ENCODE measurements at regions of chr11 and their contacts with region 1.

Region 1: GRCh38 chr11:17352950-17353820 is 1.6 kb downstream of the NCR3LG1 start:
- DNase-seq: peak; percentile 87 to 91
- H3K4me3 ChIP-seq: peak overlapping the region; percentile 61
- H3K4me3 Mint-ChIP-seq: peak overlapping the region; percentile 91
- H3K27ac Mint-ChIP-seq: peak overlapping the region; percentile 72
- H3K4me1 ChIP-seq: peaks cover 4% of the 10 kb centered on the region
- H3K4me1 Mint-ChIP-seq: peaks cover 14% of the 10 kb centered on the region
- H3K27me3 ChIP-seq: no peaks in the 10 kb centered on the region
- H3K27me3 Mint-ChIP-seq: no peaks in the 10 kb centered on the region
- CTCF ChIP-seq: no peak

Region 2: DNA sequence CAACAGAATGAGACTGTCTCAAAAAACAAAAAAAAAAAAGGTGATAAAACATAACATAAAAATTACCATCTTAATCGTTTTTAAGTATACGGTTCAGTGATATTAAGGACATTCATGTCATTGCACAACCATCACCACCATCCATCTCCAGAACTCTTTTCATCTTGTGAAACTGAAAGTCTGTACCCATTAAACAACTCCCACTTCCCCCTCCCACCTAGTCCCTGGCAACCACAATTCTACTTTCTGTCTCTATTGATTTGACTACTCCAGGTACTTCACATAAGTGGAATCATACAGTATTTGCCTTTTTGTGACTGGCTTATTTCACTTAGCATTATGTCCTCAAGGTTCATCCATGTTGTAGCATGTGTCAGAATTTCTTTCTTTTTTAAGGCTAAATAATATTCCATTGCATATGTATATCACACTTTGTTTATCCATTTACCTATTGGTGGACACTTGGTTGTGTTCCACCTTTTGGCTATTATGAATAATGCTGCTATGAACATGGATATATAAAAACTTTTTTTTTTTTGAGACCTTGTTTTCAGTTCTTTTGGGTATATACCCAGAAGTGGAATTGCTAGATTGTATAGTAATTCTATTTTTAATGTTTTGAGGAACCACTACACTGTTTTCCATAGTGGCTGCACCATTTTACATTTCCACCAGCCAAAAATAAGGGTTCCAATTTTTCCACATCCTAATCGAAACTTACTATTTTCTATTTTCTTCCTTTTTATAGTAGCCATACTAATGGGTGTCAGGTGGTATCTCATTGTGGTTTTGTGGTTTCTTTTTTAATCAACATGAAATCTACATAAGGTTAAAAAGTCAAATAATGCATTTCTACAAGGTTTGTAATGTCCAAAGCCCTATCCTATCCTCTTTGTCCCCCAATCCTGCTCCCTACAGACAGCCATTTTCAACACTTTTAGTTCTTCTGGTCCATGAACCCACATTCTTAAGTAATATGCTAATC is 122.0 kb before region 1 on chr11:
- CTCF ChIA-PET with region 1: interaction called, 5 read pairs
- POLR2A ChIA-PET with region 1: no interaction called
- intact Hi-C with region 1: loop called (anchors 2 kb)
- DNase-seq: no peak
- H3K4me3 ChIP-seq: no peak overlapping the region
- H3K4me3 Mint-ChIP-seq: no peak overlapping the region
- H3K27ac Mint-ChIP-seq: no peak overlapping the region
- H3K4me1 ChIP-seq: no peaks in the 10 kb centered on the region
- H3K4me1 Mint-ChIP-seq: peaks cover 6% of the 10 kb centered on the region
- H3K27me3 ChIP-seq: no peaks in the 10 kb centered on the region
- H3K27me3 Mint-ChIP-seq: no peaks in the 10 kb centered on the region
- CTCF ChIP-seq: no peak

Region 3: DNA sequence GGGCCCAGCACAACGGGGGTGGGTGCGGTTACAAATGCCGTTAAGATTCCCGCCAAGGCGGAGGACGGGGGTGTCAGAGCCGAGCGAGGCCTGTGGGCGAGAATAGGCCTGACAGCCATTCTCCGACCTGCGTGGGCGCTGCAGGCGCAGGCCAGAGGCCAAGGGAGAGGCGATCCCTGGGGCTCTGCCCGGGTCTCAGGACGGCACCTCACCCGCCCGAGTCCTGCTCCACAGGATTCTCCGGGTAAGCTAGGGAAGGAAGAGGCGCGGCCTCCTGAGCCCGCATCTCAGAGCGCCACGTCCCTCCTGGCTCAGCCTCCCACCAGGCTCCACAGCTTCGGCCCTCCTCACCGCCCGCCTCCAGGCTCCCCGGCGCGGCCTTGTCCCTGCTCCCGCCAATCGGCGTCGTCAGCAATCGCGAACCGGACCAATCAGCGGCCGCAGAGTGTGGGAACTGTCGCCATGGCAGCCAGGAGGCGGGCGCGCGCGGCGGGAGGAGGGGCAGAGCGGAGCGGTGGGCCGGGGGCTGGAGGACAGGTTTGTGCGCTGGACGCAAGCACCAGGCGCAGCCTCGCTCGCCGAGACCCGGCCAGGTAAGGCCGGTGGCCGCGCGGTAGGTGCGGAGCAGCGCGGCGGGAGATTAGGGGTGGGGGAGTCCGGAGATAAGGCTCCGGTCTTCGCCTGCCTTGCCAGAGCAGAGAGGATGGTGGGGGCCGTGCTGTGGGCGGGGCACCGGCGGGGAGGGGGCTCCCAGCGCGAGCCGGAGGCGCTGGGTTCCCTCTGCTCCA is 76.8 kb before region 1 on chr11 and contains the start of gene NUCB2:
- CTCF ChIA-PET with region 1: no interaction called
- POLR2A ChIA-PET with region 1: no interaction called
- intact Hi-C with region 1: loop called (anchors 2 kb)
- DNase-seq: peak; percentile 98 to 99
- H3K4me3 ChIP-seq: peak within 1 kb of the TSS; percentile 86
- H3K4me3 Mint-ChIP-seq: peak within 1 kb of the TSS; percentile 97
- H3K27ac Mint-ChIP-seq: peak within 1 kb of the TSS; percentile 21
- H3K4me1 ChIP-seq: peaks cover 14% of the 10 kb centered on the region; the same call in 1 of the 2 replicates
- H3K4me1 Mint-ChIP-seq: peaks cover 7% of the 10 kb centered on the region
- H3K27me3 ChIP-seq: no peaks in the 10 kb centered on the region
- H3K27me3 Mint-ChIP-seq: no peaks in the 10 kb centered on the region
- CTCF ChIP-seq: no peak
- total RNA-seq, gene NUCB2: 54.5 and 66.6 TPM in 2 replicates

Measured in Caco-2 (cell line).